ENCODE measurements at regions of chr9 and their contacts with region 1.

Region 1: DNA sequence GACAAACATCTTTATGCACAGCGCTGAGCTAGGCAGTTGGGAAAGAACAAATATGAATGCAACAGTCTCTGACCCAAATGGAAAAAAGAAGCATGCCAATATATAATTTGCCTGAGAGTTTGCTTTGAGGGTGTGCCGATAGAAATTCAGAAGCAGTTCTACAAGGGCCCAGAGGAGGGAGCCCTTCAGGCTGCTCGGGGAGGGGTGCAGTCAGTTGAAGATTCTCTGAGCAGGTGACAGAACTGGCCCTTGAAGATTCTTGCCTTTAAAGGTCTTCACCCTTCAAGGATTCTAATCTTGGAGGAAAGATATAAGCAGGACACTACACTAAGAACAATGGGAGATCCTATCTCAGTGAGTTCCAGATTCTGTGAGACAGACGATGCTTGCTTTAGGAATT is 3.7 kb upstream of the PAPPA start:
- DNase-seq: peak; percentile 51
- H3K4me3 Mint-ChIP-seq: no peak overlapping the region
- H3K27ac Mint-ChIP-seq: no peak overlapping the region
- H3K4me1 Mint-ChIP-seq: peaks cover 24% of the 10 kb centered on the region
- H3K27me3 Mint-ChIP-seq: no peaks in the 10 kb centered on the region
- CTCF ChIP-seq: peak; percentile 47

Region 2: GRCh38 chr9:116504893-116505480 is 355.1 kb after region 1 on chr9:
- CTCF ChIA-PET with region 1: no interaction called
- POLR2A ChIA-PET with region 1: no interaction called
- intact Hi-C with region 1: loop called (anchors 2 kb)
- DNase-seq: no peak
- H3K4me3 Mint-ChIP-seq: no peak overlapping the region
- H3K27ac Mint-ChIP-seq: no peak overlapping the region
- H3K4me1 Mint-ChIP-seq: peaks cover 35% of the 10 kb centered on the region
- H3K27me3 Mint-ChIP-seq: no peaks in the 10 kb centered on the region
- CTCF ChIP-seq: no peak

Region 3: DNA sequence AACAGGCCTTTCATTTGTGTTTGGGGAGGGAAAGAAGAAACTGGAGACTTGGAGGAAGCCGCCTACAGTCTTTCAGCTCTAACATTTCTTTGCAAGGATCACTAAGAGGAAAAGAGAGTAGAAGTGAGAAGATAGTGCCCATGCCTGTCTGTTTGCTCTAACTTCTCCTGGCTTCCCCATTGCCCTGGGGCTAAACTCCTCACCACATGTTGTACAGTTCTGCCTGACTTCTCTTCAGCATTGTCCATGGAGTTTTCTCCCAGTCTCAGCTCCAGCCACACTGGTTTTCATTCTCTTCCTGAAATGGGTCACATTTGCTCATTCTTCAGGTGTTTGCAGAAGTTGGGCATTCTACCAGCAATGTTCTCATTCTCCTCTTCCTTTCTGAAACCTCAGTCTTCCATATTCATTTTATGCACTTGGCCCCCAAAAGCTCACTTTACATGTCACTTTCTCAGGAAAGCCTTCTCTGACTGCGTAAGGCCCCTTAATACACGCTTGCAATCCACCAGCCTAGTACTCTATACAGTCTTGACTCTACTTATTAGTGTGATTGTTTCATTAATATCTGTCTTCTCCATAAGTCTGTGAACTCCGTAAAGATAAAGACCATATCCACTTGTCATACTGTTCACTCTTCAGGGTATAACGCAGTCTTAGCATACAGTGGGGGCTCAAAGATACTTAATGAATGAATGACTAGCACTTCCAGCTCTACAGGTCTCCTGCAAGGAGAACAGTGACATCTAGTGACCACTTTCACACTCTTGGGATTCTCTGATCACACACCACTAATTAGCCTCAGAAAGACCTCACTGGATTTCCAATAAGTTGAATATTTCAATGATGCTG is 497.0 kb after region 1 on chr9:
- CTCF ChIA-PET with region 1: interaction called, 13 read pairs
- POLR2A ChIA-PET with region 1: no interaction called
- intact Hi-C with region 1: loop called (anchors 5 kb)
- DNase-seq: peak; percentile 59
- H3K4me3 Mint-ChIP-seq: no peak overlapping the region
- H3K27ac Mint-ChIP-seq: no peak overlapping the region
- H3K4me1 Mint-ChIP-seq: peaks cover 6% of the 10 kb centered on the region
- H3K27me3 Mint-ChIP-seq: no peaks in the 10 kb centered on the region
- CTCF ChIP-seq: peak; percentile 80

Measured in MCF 10A (cell line).